Activated CD8-positive, alpha-beta T cell treated with anti-CD3 and anti-CD28 coated beads for 36 hours (primary cell): ENCODE measurements at regions of chr1 and their contacts with region 1.

Region 1: GRCh38 chr1:31715087-31715872 is 11.5 kb upstream of the COL16A1 start:
- DNase-seq: peak; percentile 50
- ATAC-seq: peak; percentile 75
- H3K4me3 Mint-ChIP-seq: peak overlapping the region; percentile 31
- H3K27ac Mint-ChIP-seq: no peak overlapping the region
- H3K4me1 Mint-ChIP-seq: peaks cover 12% of the 10 kb centered on the region
- H3K27me3 Mint-ChIP-seq: peaks cover 47% of the 10 kb centered on the region
- CTCF ChIP-seq: peak; percentile 63

Region 2: DNA sequence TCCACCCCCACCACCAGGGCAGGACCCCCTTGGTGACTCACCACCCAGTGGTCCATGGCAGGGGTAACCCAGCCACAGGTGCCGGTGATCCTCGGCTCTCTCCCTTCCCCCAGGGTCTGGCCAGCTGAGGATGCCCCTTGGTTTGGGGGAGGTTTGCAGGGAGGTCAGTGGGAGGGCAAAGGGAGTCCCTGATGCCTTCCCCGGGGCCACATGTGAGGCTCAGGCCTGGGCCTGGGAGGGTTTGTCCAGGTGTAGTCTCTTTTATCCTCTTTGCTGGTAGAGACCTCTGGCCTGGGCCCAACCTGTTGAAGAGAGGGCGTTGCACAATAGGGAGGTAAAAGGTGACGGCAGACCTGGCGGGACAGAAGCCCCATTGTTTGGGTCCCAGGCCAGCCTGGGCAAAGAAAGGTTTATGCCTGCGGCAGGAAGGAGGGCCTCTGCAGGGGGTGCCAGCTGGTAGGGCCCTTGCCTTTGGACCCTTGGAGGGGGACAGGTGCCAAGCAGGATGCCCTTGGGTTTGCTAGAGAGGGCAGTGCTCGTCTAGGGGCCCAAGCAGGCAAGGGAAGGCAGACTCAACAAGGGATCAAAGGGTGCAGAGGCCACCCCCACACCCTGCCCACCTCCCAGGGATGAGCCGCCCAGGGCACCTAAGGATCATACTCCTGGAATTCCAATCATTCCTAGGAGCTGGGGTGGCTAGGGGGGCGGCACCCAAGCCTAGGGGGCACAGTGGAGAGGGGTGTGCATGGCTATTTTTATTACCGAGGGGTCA is 139.7 kb before region 1 on chr1:
- CTCF ChIA-PET with region 1: no interaction called
- POLR2A ChIA-PET with region 1: no interaction called
- intact Hi-C with region 1: no loop called
- DNase-seq: no peak
- ATAC-seq: no peak
- H3K4me3 Mint-ChIP-seq: no peak overlapping the region
- H3K27ac Mint-ChIP-seq: no peak overlapping the region
- H3K4me1 Mint-ChIP-seq: no peaks in the 10 kb centered on the region
- H3K27me3 Mint-ChIP-seq: peaks cover 9% of the 10 kb centered on the region
- CTCF ChIP-seq: no peak

Region 3: GRCh38 chr1:31669786-31670592 is 45.3 kb before region 1 on chr1:
- CTCF ChIA-PET with region 1: interaction called, 10 read pairs
- POLR2A ChIA-PET with region 1: no interaction called
- intact Hi-C with region 1: no loop called
- DNase-seq: peak; percentile 40
- ATAC-seq: peak; percentile 81
- H3K4me3 Mint-ChIP-seq: peak overlapping the region; percentile 38
- H3K27ac Mint-ChIP-seq: no peak overlapping the region
- H3K4me1 Mint-ChIP-seq: peaks cover 10% of the 10 kb centered on the region
- H3K27me3 Mint-ChIP-seq: peaks cover 12% of the 10 kb centered on the region
- CTCF ChIP-seq: no peak

Region 4: DNA sequence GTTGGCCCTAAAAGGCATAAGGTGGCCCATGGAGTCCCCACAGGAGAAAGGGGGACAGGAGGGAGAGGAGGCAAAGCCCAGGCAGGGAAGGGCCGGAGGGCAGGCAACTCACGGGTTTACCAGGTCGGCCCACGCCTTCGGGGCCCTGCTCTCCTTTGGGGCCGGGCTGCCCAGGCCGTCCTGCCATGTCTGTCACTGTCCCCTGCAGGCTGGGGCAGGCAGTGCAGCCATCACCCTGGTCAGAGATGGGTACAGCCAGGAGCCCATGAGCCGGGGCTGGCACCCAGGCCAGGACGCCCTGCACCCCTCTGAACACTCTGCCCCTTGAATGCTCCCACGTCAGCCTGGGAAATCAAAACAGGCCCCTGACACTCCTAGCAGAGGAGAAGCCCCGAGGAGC is 31.3 kb before region 1 on chr1:
- CTCF ChIA-PET with region 1: no interaction called
- POLR2A ChIA-PET with region 1: no interaction called
- intact Hi-C with region 1: no loop called
- DNase-seq: peak; percentile 27
- ATAC-seq: peak; percentile 74
- H3K4me3 Mint-ChIP-seq: no peak overlapping the region
- H3K27ac Mint-ChIP-seq: no peak overlapping the region
- H3K4me1 Mint-ChIP-seq: no peaks in the 10 kb centered on the region
- H3K27me3 Mint-ChIP-seq: peaks cover 13% of the 10 kb centered on the region
- CTCF ChIP-seq: peak; percentile 37

Region 5: GRCh38 chr1:31705080-31705866 is 10.0 kb before region 1 on chr1:
- CTCF ChIA-PET with region 1: interaction called, 51 read pairs
- POLR2A ChIA-PET with region 1: no interaction called
- intact Hi-C with region 1: no loop called
- DNase-seq: peak; percentile 88
- ATAC-seq: peak; percentile 86
- H3K4me3 Mint-ChIP-seq: no peak overlapping the region
- H3K27ac Mint-ChIP-seq: no peak overlapping the region
- H3K4me1 Mint-ChIP-seq: peaks cover 39% of the 10 kb centered on the region
- H3K27me3 Mint-ChIP-seq: peaks cover 32% of the 10 kb centered on the region
- CTCF ChIP-seq: peak; percentile 37

Region 6: DNA sequence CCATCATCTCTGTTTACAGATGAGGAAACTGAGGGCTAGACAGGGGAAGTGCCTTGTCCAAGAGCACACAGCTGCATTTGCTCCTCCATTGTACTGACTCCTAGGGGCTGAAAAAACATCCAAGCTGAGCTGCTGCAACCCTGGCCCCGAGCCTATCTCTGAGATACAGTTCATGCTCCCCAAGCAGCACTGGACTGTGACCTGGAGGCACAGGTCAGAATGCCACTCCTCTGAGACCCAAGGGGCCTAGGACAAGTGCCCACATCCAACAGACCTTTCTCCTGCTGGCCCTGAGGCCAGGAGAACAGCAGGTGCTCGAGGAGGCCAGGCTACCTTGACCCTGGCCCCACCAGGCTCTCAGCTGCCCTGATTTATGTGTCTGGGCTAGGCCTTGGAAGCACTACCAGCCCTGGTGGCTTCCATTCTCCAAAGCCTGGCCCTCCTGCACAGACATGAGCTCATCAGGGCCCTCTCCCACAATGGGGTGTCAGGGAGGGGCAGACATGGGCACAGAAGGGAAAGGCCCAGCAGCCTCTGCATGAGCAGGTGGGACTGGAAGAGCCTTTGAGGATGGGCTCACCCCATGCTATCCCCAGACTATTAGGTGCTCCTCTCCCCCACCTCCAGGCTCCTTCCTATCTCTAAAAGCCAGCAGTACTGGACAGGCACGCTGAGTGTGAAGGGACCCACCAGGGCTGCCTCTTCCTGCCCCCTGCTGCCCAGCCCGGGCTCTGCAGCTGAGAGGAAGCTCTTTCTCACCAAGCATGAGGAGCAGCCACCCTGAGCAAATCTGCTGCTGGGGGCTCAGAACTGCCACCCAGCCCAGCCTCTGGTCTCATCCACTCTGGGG is 30.0 kb after region 1 on chr1:
- CTCF ChIA-PET with region 1: interaction called, 28 read pairs
- POLR2A ChIA-PET with region 1: interaction called, 3 read pairs
- intact Hi-C with region 1: no loop called
- DNase-seq: peak; percentile 82
- ATAC-seq: peak; percentile 92
- H3K4me3 Mint-ChIP-seq: no peak overlapping the region
- H3K27ac Mint-ChIP-seq: no peak overlapping the region
- H3K4me1 Mint-ChIP-seq: peaks cover 11% of the 10 kb centered on the region
- H3K27me3 Mint-ChIP-seq: peaks cover 2% of the 10 kb centered on the region
- CTCF ChIP-seq: peak; percentile 75

Region 7: GRCh38 chr1:31762726-31763670 is 47.7 kb after region 1 on chr1:
- CTCF ChIA-PET with region 1: no interaction called
- POLR2A ChIA-PET with region 1: no interaction called
- intact Hi-C with region 1: loop called (anchors 10 kb)
- DNase-seq: peak; percentile 74
- ATAC-seq: peak; percentile 55
- H3K4me3 Mint-ChIP-seq: peak overlapping the region; percentile 64
- H3K27ac Mint-ChIP-seq: no peak overlapping the region
- H3K4me1 Mint-ChIP-seq: peaks cover 22% of the 10 kb centered on the region
- H3K27me3 Mint-ChIP-seq: peaks cover 27% of the 10 kb centered on the region
- CTCF ChIP-seq: peak; percentile 83

Region 8: DNA sequence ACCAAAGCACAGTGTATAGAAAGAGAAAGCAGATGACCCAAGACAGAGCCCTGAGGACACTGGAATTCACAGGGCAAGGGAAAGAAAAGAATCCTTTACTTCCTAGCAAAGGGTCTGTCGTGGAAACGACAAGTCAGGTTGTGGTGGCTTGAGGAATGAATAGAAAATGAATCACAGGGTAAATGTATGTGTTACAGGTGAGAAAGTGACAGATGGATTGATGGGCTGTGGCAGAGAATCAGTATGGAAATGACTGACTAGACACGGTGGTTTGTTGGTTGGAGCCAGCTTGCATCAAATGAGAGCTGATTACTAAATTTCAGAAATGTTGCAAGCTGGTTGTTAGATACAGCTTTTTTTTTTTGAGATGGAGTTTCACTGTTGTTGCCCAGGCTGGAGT is 176.0 kb after region 1 on chr1:
- CTCF ChIA-PET with region 1: no interaction called
- POLR2A ChIA-PET with region 1: no interaction called
- intact Hi-C with region 1: no loop called
- DNase-seq: peak; percentile 71
- ATAC-seq: peak; percentile 63
- H3K4me3 Mint-ChIP-seq: no peak overlapping the region
- H3K27ac Mint-ChIP-seq: peak overlapping the region; percentile 30
- H3K4me1 Mint-ChIP-seq: peaks cover 27% of the 10 kb centered on the region
- H3K27me3 Mint-ChIP-seq: no peaks in the 10 kb centered on the region
- CTCF ChIP-seq: no peak